Heart left ventricle (tissue), 16 donors: ENCODE measurements at regions of chr18 and their contacts with region 1.

Region 1: GRCh38 chr18:65091744-65092329 is 659.0 kb upstream of the CDH7 start:
- DNase-seq: no peak
- ATAC-seq: no peak
- H3K4me3 ChIP-seq: no peak overlapping the region
- H3K27ac ChIP-seq: no peak overlapping the region
- H3K4me1 ChIP-seq: no peaks in the 10 kb centered on the region
- H3K27me3 ChIP-seq: no peaks in the 10 kb centered on the region
- CTCF ChIP-seq: peak; percentile 30 to 62 (median 48)
- POLR2A ChIP-seq: no peak

Region 2: GRCh38 chr18:64017870-64018269 is 1074.0 kb before region 1 on chr18:
- intact Hi-C with region 1: loop called in 2 of 10 experiments (anchors 5 to 10 kb)
- DNase-seq: no peak
- ATAC-seq: no peak
- H3K4me3 ChIP-seq: no peak overlapping the region
- H3K27ac ChIP-seq: no peak overlapping the region
- H3K4me1 ChIP-seq: no peaks in the 10 kb centered on the region
- H3K27me3 ChIP-seq: no peaks in the 10 kb centered on the region
- CTCF ChIP-seq: peak; percentile 18 to 58 (median 48)
- POLR2A ChIP-seq: no peak

Region 3: GRCh38 chr18:64037812-64038414 is 1053.9 kb before region 1 on chr18:
- intact Hi-C with region 1: loop called in 1 of 10 experiments (anchors 5 kb)
- DNase-seq: no peak
- ATAC-seq: no peak
- H3K4me3 ChIP-seq: no peak overlapping the region
- H3K27ac ChIP-seq: no peak overlapping the region
- H3K4me1 ChIP-seq: no peaks in the 10 kb centered on the region
- H3K27me3 ChIP-seq: peaks cover 0 to 4% (median 0%) of the 10 kb centered on the region in 9 donors
- CTCF ChIP-seq: peak; percentile 32 to 68 (median 56)
- POLR2A ChIP-seq: no peak

Region 4: DNA sequence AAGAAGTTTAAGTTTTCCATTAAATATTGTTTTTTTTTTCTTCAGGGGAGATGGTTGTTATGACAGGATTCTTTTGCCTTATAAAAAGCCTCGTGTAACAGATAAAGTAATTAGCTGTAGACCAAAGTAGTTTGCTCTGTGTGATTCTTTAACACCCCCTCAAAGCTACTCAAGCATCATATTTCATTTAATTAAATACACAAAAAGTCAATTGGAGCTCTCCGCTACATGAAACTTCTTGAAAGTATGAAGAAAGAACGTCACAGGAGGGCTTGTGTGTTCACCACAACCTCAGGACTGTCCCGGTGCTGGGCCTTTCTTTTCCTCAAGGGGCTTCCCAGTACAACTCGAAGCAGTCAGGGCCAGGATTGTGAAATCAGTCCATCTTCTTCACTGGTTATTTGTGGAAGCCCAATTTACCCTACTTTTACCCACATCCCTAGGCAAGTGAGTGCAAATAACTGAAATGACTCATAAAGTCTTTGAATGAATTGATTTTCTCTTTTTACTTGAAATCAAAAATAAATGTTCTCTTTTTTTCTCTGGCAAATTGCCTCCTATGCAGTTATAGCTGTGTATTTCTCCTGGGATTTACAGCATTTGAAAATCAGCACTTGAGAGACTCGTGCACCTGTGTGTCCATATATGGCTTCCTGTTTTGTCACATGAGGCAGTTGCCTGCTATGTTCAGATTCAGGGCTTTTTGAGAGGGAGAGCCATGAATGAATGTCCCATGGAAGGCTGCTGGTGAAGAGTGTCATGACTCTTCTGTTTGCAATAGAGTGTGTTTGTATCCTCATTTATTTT is 991.5 kb before region 1 on chr18:
- intact Hi-C with region 1: loop called in 1 of 10 experiments (anchors 5 kb)
- DNase-seq: no peak
- ATAC-seq: no peak
- H3K4me3 ChIP-seq: no peak overlapping the region
- H3K27ac ChIP-seq: no peak overlapping the region
- H3K4me1 ChIP-seq: no peaks in the 10 kb centered on the region
- H3K27me3 ChIP-seq: peaks cover 0 to 1% (median 0%) of the 10 kb centered on the region in 9 donors
- CTCF ChIP-seq: no peak
- POLR2A ChIP-seq: no peak

Region 5: GRCh38 chr18:65146482-65147021 is 54.7 kb after region 1 on chr18:
- intact Hi-C with region 1: loop called in 1 of 10 experiments (anchors 10 kb)
- DNase-seq: no peak
- ATAC-seq: no peak
- H3K4me3 ChIP-seq: no peak overlapping the region
- H3K27ac ChIP-seq: no peak overlapping the region
- H3K4me1 ChIP-seq: no peaks in the 10 kb centered on the region
- H3K27me3 ChIP-seq: no peaks in the 10 kb centered on the region
- CTCF ChIP-seq: no peak
- POLR2A ChIP-seq: no peak

Region 6: DNA sequence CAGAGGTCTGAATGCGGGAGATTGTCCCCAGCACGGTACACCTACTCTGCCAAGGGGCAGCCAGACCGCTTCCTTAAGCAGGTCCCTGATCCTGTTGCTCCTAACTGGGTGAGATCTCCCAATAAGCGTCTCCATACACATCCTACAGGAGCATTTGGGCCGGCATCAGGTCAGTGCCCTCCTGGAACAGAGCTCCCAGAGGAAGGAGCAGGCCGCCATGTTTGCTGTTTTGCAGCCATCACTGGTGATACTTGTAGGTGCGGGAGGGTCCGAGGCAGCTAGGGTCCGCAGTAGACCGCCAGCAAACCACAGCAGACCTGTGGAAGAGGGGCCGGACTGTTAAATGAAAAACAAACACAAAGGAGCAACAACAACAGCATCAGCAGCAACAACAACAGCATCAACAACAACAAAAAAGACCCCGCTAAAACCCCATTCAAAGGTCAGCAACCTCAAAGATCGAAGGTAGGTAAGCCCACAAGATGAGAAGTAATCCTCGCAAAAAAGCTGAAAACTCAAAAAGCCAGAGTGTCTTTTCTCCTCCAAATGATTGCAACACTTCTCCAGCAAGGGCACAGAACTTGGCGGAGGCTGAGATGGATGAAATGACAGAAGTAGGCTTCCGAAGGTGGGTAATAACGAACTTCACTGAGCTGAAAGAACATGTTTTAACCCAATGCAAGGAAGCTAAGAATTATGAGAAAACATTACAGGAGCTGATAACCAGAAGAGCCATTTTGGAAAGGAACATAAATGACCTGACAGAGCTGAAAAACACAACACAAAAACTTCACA is 580.0 kb after region 1 on chr18:
- intact Hi-C with region 1: no loop called
- DNase-seq: peak in 1 of 5 donors; percentile 43
- ATAC-seq: no peak
- H3K4me3 ChIP-seq: no peak overlapping the region
- H3K27ac ChIP-seq: no peak overlapping the region
- H3K4me1 ChIP-seq: no peaks in the 10 kb centered on the region
- H3K27me3 ChIP-seq: no peaks in the 10 kb centered on the region
- CTCF ChIP-seq: no peak
- POLR2A ChIP-seq: no peak